ENCODE measurements at regions of chrX and their contacts with region 1.

Region 1: DNA sequence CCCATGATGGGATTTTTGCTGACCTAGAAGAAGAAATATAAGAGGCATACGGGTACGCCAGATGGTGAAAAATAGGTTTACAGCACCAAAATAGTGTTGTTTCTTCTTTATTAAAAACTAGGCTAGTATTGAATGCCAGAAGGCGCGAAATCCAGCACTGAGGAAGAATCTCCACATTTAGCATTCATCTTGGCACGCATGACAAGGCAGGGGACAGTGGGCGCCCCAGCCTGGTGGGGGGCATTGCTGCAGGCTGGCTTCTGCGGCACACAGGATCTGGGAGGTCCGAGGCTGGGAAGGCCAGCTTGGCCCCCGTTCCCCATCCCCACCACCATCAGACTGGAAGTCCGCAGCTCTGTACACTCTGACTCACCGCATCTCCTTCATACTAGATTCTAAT is 75.7 kb upstream of the DDX3X start:
- H3K4me3 Mint-ChIP-seq: no peak overlapping the region
- H3K27ac Mint-ChIP-seq: no peak overlapping the region
- H3K4me1 Mint-ChIP-seq: peaks cover 10% of the 10 kb centered on the region
- H3K27me3 Mint-ChIP-seq: peaks cover under 1% of the 10 kb centered on the region

Region 2: GRCh38 chrX:41180194-41180908 is 77.9 kb before region 1 on chrX:
- intact Hi-C with region 1: loop called (anchors 1 kb)
- H3K4me3 Mint-ChIP-seq: no peak overlapping the region
- H3K27ac Mint-ChIP-seq: no peak overlapping the region
- H3K4me1 Mint-ChIP-seq: peaks cover 11% of the 10 kb centered on the region
- H3K27me3 Mint-ChIP-seq: no peaks in the 10 kb centered on the region

Region 3: DNA sequence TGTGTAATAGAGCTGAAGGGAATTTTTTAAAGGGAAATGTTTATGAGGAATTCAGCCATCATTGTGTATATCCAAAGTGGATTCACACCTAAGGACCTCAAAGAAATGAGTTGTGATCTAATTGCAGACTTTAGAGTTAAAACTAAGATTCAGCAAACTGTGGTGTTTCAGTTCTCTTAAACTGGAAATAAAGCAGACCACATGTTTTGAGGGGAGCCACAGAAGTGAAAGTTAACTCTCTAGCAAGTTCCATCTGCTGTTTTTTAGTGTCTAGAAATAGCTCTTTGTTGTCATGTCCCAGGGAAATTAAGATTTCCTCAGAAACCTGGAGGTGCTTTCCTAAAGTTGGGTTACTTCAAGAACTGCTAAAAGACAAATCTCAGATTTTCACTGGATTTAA is 21.6 kb before region 1 on chrX:
- intact Hi-C with region 1: loop called (anchors 2 kb)
- H3K4me3 Mint-ChIP-seq: no peak overlapping the region
- H3K27ac Mint-ChIP-seq: no peak overlapping the region
- H3K4me1 Mint-ChIP-seq: peaks cover 5% of the 10 kb centered on the region
- H3K27me3 Mint-ChIP-seq: no peaks in the 10 kb centered on the region

Region 4: DNA sequence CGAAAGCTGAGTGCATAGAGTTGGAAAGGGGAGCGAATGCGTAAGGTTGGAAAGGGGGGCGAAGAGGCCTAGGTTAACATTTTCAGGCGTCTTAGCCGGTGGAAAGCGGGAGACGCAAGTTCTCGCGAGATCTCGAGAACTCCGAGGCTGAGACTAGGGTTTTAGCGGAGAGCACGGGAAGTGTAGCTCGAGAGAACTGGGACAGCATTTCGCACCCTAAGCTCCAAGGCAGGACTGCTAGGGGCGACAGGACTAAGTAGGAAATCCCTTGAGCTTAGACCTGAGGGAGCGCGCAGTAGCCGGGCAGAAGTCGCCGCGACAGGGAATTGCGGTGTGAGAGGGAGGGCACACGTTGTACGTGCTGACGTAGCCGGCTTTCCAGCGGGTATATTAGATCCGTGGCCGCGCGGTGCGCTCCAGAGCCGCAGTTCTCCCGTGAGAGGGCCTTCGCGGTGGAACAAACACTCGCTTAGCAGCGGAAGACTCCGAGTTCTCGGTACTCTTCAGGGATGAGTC is 75.6 kb after region 1 on chrX and contains the start of gene DDX3X:
- intact Hi-C with region 1: no loop called
- H3K4me3 Mint-ChIP-seq: peak within 1 kb of the TSS; percentile 89
- H3K27ac Mint-ChIP-seq: peak within 1 kb of the TSS; percentile 99
- H3K4me1 Mint-ChIP-seq: no peaks in the 10 kb centered on the region
- H3K27me3 Mint-ChIP-seq: no peaks in the 10 kb centered on the region

Region 5: DNA sequence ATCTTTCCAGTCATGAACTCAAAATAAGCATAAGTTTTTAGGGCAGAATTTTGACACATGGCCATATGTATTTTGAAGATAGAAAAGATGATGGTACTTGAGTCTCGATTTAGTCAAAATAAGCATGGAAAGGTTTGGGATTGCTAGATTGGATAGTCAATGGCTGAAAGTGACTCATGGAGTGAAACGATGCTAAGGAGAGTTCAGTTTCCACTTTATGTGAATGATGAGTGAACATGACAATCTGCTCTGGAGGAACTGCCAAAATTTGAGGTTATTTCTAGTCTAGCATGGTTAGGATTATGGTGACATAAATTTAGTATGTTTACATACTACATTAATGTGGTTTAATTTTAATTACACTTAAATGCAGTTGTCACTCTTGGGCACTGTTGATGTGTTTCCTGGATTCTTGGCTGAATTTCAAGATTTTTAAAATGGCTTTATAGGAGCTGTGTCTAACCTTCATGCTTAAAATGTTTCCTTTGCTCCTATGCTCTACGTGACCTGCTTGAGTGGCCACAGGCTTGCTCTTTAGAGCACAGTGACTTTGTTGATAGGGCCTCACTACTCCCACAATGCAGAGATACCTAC is 92.8 kb after region 1 on chrX:
- intact Hi-C with region 1: no loop called
- H3K4me3 Mint-ChIP-seq: no peak overlapping the region
- H3K27ac Mint-ChIP-seq: no peak overlapping the region
- H3K4me1 Mint-ChIP-seq: peaks cover 12% of the 10 kb centered on the region
- H3K27me3 Mint-ChIP-seq: no peaks in the 10 kb centered on the region

Measured in dendritic cell treated with granulocyte-macrophage colony-stimulating factor and Interleukin-4, amounts not matched to agents 40 ng/mL and 50 ng/mL, for 4 days (primary cell).